Mammary epithelial cell (primary cell): ENCODE measurements at regions of chr14 and their contacts with region 1.

Region 1: DNA sequence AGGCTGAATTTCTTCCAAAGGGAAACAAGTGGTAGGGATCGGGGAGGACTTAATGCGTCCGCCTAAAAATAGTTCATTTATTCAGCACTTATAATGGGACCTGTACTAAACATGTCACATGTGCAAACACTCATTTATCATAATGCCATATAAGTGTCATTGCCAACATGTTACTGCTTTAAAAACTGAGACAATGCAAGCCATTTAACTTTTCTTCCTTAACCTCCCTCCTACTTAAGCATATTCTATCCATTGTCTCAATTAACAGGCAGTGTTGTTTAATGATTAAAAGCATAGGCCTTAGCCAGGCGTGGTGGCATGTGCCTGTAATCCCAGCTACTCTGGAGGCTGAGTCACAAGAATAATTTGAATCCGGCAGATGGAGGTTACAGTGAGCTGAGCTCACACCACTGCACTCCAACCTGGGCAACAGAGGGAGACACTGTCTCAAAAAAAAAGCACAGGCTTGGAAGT is 13.5 kb upstream of the SCFD1 start:
- DNase-seq: peak; percentile 56
- H3K4me3 ChIP-seq: no peak overlapping the region
- H3K27ac ChIP-seq: no peak overlapping the region
- H3K4me1 ChIP-seq: peaks cover 9% of the 10 kb centered on the region
- H3K27me3 ChIP-seq: no peaks in the 10 kb centered on the region
- CTCF ChIP-seq: peak in 1 of 2 donors; percentile 29

Region 2: DNA sequence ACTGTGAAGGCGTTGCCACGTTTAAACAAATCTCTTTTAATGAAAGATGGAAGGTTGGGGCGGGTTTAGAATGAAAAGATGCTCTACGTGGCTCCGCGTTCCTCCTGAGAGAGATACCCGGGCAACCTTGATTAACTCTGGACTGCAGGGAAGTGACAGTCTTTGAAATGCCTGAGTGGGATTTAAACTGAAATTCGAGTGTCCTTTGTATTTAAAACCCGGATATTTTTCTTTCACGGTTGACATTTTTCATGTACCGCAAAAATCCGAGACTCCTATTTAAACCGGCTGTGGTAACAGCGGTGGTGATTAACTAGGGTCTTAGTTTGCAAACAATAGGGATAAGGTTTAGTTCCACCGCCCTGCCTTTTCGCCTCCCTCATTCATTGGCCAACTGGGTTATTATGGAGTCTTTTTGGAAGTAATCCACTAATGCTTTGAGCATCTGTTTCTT is 48.9 kb before region 1 on chr14:
- CTCF ChIA-PET with region 1: no interaction called
- dilution Hi-C with region 1: no loop called
- in situ Hi-C with region 1: no loop called
- intact Hi-C with region 1: loop called (anchors 5 kb)
- DNase-seq: peak; percentile 38
- H3K4me3 ChIP-seq: peak overlapping the region; percentile 78 to 94 (median 89)
- H3K27ac ChIP-seq: peak overlapping the region; percentile 84
- H3K4me1 ChIP-seq: peaks cover 13% of the 10 kb centered on the region
- H3K27me3 ChIP-seq: no peaks in the 10 kb centered on the region
- CTCF ChIP-seq: no peak

Region 3: DNA sequence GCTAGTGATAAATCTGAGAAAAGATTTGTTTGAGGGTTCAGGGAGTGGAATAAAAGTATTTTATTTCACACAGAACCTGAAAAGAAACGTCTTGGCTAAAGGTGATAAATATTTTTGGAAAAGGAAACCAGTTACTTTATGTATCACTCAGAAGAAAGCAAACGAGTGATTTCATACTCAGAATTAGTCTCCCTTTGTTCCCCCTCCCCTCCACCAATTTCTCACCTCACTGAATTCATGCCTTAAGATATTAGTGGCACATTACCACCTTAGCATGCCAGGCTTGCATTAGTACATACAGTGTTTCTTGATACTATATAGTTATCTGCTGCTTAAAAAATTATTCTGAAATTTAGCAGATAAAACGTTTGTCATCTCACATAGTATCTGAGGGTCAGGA is 21.4 kb before region 1 on chr14:
- CTCF ChIA-PET with region 1: no interaction called
- dilution Hi-C with region 1: no loop called
- in situ Hi-C with region 1: no loop called
- intact Hi-C with region 1: no loop called
- DNase-seq: no peak
- H3K4me3 ChIP-seq: no peak overlapping the region
- H3K27ac ChIP-seq: no peak overlapping the region
- H3K4me1 ChIP-seq: no peaks in the 10 kb centered on the region
- H3K27me3 ChIP-seq: no peaks in the 10 kb centered on the region
- CTCF ChIP-seq: no peak

Region 4: GRCh38 chr14:30906752-30907658 is 298.4 kb after region 1 on chr14:
- CTCF ChIA-PET with region 1: no interaction called
- dilution Hi-C with region 1: no loop called
- in situ Hi-C with region 1: no loop called
- intact Hi-C with region 1: no loop called
- DNase-seq: peak; percentile 34
- H3K4me3 ChIP-seq: no peak overlapping the region
- H3K27ac ChIP-seq: peak overlapping the region; percentile 40
- H3K4me1 ChIP-seq: peaks cover 12% of the 10 kb centered on the region
- H3K27me3 ChIP-seq: no peaks in the 10 kb centered on the region
- CTCF ChIP-seq: peak; percentile 12 to 35